Right ventricle myocardium inferior (tissue), 1 donor: ENCODE measurements at regions of chr9 and their contacts with region 1.

Region 1: DNA sequence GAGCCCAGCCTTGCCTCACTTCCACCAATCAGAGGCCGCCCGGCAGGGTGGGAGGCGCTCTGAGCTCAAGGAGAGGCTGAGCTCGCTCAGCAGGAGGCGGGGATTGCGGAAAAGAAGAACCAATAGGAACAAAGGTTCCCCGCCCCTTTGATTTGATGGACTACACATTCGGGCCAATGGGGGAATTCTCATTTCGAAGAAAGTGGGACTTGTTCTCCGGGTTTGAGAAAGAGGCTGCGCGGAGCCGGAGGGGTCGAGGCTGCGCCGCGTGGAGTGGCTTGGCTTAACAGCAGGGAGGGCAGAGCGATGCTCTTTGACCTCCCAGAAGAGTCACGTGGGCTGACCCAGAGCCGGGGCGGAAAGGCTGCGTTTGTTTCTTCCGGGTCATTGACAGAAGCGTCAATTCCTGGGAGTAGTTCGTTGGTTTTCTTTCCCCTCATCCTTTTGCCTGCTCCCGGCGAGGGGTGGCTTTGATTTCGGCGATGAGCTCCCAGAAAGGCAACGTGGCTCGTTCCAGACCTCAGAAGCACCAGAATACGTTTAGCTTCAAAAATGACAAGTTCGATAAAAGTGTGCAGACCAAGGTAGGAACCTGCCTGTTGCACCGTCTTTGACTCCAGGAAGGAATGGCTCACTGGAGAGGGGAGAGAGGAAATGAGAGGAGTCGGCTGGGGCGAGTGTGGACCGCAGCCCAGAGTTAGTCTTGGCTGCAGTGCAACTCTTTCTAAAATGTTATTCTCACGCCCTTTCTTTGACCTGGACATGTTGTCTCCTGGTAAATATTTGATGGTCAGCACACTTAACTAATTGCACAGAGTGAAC is at the start of gene C9orf85:
- DNase-seq: peak; percentile 100
- ATAC-seq: peak; percentile 99
- total RNA-seq, gene C9orf85: 9.4 TPM

Region 2: DNA sequence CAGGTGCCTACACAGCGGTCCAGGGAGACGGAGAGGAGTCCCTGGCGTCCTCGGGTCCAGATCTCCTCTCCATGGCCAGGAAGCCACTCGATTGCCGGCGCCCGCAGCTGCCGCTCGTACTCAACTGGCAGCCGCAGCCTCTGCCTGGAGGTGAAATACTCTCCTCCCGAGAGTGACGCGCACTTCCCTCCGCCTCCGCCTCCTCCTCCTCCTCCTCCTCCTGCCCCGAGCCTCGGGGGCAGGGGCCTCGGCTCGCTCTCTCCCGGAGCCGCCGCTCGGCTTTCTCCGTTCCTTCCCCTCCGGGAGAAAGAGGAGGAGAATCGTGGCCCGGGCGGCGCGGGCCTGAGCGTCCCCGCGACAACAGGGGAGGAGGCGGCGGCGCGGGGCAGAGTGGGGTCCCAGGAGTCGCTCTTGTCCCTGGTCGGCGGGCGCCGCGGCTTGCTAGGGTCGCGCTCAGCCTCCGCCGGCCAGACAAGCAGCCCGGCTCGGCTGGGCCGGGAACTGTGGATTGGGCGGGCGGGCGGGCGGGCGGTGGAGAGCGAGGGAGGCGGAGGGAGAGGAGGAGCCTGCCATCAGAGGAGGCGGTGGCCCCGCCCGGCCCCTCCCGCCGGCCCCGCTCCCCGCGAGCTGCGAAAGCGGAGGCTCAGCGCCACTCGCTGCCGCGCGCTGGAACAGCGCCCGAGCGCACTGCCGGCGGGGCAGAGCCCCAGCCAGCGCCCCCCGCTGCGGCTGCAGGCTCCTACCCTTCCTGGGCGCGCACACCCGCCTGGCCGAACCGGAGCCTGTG is 142.9 kb before region 1 on chr9 and contains the start of gene CEMIP2:
- intact Hi-C with region 1: loop called (anchors 1 kb)
- DNase-seq: peak; percentile 95
- ATAC-seq: peak; percentile 93
- total RNA-seq, gene CEMIP2: 9.3 TPM

Region 3: DNA sequence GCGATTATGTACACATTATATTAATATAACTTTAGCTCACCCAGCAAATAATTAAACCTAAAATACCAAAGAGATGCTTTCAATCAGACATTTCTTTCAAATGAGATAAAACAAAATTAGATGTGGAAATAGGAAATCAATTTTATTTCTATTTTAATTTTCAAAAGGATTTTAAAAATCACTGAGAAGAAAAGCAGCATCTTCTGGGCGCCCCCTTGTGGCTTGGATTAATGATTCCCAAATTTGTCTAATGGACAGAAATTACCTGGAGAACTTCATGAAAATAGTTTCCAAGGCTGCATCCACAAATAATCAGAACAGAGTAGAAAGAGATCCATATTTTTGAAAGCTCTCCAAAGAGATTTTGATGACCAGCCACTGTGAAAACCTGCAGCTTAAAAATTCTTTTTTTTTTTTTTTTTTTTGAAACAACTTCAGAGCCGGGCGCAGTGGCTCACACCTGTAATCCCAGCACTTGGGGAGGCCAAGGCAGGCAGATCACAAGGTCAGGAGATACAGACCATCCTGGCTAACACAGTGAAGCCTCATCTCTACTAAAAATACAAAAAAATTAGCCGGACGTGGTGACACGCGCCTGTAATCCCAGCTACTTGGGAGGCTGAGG is 92.2 kb before region 1 on chr9:
- intact Hi-C with region 1: loop called (anchors 10 kb)
- DNase-seq: no peak
- ATAC-seq: no peak

Region 4: DNA sequence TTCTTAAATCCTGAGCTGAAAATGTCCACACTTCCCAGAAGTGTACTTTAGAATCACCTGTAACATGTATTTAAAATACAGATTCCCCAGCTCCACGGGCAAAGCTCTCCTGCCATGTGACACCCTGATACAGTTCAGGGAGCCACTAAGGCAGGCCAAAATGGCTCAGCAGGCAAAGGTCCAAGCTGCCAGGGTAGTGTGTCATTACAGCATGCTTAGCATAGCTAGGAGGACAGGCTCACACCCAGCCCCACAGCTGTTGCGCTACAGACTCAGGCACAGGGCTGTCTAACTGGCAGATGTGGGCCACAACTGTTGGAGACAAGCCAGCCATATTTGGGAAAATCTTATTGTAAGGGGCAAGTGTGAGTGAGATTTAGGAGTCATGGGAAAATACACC is 72.9 kb after region 1 on chr9:
- intact Hi-C with region 1: loop called (anchors 5 kb)
- DNase-seq: peak; percentile 77
- ATAC-seq: peak; percentile 88

Region 5: DNA sequence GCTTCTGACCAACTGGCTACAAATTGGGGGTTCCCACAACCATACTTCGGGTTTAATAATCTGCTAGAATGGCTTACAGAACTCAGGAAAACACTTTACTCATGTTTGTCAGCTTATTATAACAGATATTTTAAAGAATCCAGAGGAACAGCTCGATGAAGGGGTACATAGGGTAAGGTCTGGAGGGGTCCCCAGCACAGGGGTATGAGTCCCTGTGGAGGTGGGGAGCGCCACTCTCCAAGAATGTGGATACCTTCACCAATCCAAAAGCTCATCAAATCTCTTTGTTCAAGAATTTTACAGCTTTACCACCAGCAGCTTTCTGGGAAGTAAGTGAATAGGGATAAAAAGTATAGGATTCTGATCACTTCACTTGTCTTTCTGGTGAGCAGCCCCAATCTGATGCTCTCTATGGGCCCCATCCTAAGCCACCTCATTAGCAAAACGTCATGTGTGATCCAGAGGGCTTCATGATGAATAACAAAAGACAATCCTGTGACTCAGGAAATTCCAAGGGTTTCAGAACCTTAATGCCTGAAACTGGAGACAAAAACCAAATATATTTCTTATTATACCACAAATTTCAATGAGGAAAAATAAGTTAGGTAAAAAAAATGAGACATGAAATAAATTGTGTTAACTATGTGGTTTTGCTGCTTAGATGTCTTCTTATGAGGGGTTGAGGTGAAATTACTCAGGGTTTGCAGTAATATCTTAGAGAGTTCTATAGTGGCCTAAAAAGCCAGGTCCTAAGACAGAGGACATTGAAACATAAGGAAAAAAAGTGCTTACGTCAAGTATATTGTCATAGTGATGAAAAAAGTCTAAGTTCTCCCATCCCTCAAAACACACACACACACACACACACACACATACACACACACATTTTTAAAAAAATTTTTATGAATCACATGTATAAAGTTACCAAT is 1530.7 kb after region 1 on chr9:
- intact Hi-C with region 1: loop called (anchors 10 kb)
- DNase-seq: no peak
- ATAC-seq: no peak